GM12878 (cell line): ENCODE measurements at regions of chr14 and their contacts with region 1.

Region 1: GRCh38 chr14:72583316-72584272 is 310.3 kb downstream of the DPF3 start:
- DNase-seq: no peak
- ATAC-seq: no peak
- H3K4me3 ChIP-seq: no peak overlapping the region
- H3K27ac ChIP-seq: no peak overlapping the region
- H3K4me1 ChIP-seq: peaks cover 5% of the 10 kb centered on the region
- H3K27me3 ChIP-seq: no peaks in the 10 kb centered on the region
- CTCF ChIP-seq: no peak
- EP300 ChIP-seq: no peak
- POLR2A ChIP-seq: no peak
- RAD21 ChIP-seq: no peak

Region 2: DNA sequence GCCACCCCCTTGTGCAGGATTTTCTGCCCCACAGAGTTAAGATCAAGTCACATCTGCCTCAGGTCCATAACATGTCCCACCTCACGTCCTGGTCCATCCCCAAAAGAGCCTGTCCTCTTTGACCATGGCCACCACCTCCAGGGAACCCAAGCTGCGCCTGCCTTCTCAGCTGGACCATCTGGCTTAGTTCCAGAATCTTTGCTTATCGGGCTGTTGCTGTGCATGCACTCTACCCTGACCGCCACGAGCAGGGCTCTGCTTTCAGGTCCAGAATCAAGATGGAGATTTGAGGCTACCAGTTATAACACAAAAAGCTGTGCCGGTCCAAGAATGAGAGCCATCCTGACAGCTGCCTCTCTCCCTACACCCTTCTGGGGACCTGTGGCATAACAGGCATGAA is 16.4 kb before region 1 on chr14:
- CTCF ChIA-PET with region 1: interaction called, 3 read pairs
- POLR2A ChIA-PET with region 1: interaction called, 5 read pairs
- RAD21 ChIA-PET with region 1: interaction called, 4 read pairs
- SMC1A ChIA-PET with region 1: interaction called, 10 read pairs
- in situ Hi-C with region 1: no loop called
- intact Hi-C with region 1: no loop called
- DNase-seq: no peak
- ATAC-seq: peak; percentile 26
- H3K4me3 ChIP-seq: no peak overlapping the region
- H3K27ac ChIP-seq: no peak overlapping the region
- H3K4me1 ChIP-seq: no peaks in the 10 kb centered on the region
- H3K27me3 ChIP-seq: no peaks in the 10 kb centered on the region; a peak in 1 of 4 replicates
- CTCF ChIP-seq: no peak
- EP300 ChIP-seq: no peak
- POLR2A ChIP-seq: no peak
- RAD21 ChIP-seq: no peak

Region 3: DNA sequence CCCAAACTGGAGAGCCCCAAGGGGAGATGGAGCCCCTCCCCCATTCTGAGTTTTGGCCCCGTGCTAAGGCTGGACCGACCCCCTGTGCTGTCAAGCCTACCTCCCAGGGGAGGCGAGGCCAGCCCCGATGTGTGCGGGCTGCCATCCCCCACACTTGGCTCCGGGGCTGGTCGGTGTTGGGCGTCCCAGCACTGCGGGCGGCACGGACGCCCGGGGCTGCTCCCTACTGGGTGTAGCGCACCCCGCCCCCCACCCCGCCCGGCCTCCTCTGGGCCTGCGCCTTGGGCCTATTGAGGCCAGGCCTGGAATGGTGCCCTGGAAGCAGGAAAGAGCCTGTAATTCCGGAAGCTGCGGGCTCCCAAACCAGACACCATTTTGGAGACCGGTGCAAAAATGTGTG is 345.3 kb after region 1 on chr14:
- CTCF ChIA-PET with region 1: no interaction called
- POLR2A ChIA-PET with region 1: no interaction called
- RAD21 ChIA-PET with region 1: no interaction called
- SMC1A ChIA-PET with region 1: no interaction called
- in situ Hi-C with region 1: no loop called
- intact Hi-C with region 1: no loop called
- DNase-seq: no peak
- ATAC-seq: no peak
- H3K4me3 ChIP-seq: no peak overlapping the region
- H3K27ac ChIP-seq: no peak overlapping the region
- H3K4me1 ChIP-seq: no peaks in the 10 kb centered on the region; the same call in 1 of the 2 replicates
- H3K27me3 ChIP-seq: no peaks in the 10 kb centered on the region
- CTCF ChIP-seq: no peak
- EP300 ChIP-seq: no peak
- POLR2A ChIP-seq: no peak
- RAD21 ChIP-seq: no peak